Thyroid gland (tissue), 4 donors: ENCODE measurements at regions of chr18 and their contacts with region 1.

Region 1: GRCh38 chr18:51390702-51391101 is 193.2 kb upstream of the MEX3C start:
- DNase-seq: no peak
- H3K4me3 ChIP-seq: no peak overlapping the region
- H3K27ac ChIP-seq: no peak overlapping the region
- H3K4me1 ChIP-seq: no peaks in the 10 kb centered on the region
- H3K27me3 ChIP-seq: no peaks in the 10 kb centered on the region
- CTCF ChIP-seq: no peak
- POLR2A ChIP-seq: no peak

Region 2: GRCh38 chr18:51053814-51054213 is 336.9 kb before region 1 on chr18:
- intact Hi-C with region 1: no loop called
- DNase-seq: no peak
- H3K4me3 ChIP-seq: no peak overlapping the region
- H3K27ac ChIP-seq: peak overlapping the region in 2 of 3 donors; percentile 38 to 52
- H3K4me1 ChIP-seq: peaks cover 11% of the 10 kb centered on the region in 2 donors
- H3K27me3 ChIP-seq: no peaks in the 10 kb centered on the region
- CTCF ChIP-seq: no peak
- POLR2A ChIP-seq: no peak

Region 3: DNA sequence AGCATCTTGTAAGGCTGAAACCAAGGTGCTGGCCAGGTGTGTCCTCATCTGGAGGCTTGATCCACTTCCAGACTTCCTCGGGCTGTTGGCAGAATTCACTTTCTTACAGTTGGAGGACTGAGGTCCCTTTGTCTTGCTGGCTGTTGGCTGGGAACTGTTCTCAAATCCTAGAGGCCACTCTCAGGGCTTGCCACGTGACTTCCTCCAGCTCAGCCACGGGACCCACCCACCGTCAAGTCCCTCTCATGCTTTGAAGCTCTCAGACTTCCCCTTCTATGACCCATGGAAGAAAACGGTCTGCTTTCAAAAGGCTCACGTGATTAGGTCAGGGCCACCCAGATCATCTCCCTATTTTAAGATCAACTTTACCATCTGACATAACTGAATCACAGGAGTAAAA is 283.6 kb before region 1 on chr18:
- intact Hi-C with region 1: loop called (anchors 10 kb)
- DNase-seq: no peak
- H3K4me3 ChIP-seq: no peak overlapping the region
- H3K27ac ChIP-seq: no peak overlapping the region
- H3K4me1 ChIP-seq: peaks cover 0 to 6% of the 10 kb centered on the region in 2 donors
- H3K27me3 ChIP-seq: no peaks in the 10 kb centered on the region
- CTCF ChIP-seq: no peak
- POLR2A ChIP-seq: no peak

Region 4: DNA sequence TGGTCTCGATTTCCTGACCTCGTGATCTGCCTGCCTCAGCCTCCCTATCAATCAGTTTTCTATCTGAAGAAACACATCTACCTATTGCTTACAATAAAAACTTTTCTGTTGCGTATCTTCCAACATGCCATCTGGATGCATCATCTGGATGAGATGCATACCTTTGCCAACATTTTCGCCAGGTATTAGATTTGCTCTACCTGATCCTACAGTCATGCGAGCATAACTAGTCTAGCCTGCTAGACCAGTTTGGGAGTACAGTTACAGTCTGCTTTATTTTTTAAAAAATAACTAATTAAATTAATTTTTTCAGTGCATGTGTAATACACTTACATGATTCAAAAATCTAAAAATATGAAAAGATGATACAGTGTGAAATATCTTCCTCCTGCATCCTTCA is 140.8 kb after region 1 on chr18:
- intact Hi-C with region 1: no loop called
- DNase-seq: no peak
- H3K4me3 ChIP-seq: no peak overlapping the region
- H3K27ac ChIP-seq: no peak overlapping the region
- H3K4me1 ChIP-seq: no peaks in the 10 kb centered on the region
- H3K27me3 ChIP-seq: no peaks in the 10 kb centered on the region
- CTCF ChIP-seq: no peak
- POLR2A ChIP-seq: no peak

Region 5: DNA sequence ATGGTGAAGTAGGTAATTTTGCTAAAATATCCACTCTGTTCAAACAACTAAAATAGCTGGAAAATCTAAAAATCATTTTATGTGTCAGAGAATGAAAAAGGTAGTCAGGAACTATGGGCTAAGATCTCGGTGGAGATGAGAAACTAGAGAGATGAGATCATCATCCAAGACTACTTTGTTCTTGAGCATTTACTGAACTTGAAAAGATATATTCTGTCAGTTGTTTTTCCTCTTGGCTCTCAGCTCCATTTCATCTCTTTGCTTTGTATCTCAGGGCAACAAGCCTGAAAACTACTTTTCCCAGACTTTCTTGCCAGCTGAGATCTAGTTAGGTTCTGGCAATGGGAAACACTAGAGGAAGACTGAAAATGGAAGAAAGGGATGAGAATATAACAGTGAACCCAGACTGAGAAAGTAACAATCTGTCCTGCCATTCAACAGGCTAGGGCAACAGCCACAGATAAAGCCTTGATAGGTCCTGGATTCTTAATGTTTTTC is 153.0 kb after region 1 on chr18:
- intact Hi-C with region 1: no loop called
- DNase-seq: no peak
- H3K4me3 ChIP-seq: no peak overlapping the region
- H3K27ac ChIP-seq: no peak overlapping the region
- H3K4me1 ChIP-seq: no peaks in the 10 kb centered on the region
- H3K27me3 ChIP-seq: no peaks in the 10 kb centered on the region
- CTCF ChIP-seq: no peak
- POLR2A ChIP-seq: no peak

Region 6: DNA sequence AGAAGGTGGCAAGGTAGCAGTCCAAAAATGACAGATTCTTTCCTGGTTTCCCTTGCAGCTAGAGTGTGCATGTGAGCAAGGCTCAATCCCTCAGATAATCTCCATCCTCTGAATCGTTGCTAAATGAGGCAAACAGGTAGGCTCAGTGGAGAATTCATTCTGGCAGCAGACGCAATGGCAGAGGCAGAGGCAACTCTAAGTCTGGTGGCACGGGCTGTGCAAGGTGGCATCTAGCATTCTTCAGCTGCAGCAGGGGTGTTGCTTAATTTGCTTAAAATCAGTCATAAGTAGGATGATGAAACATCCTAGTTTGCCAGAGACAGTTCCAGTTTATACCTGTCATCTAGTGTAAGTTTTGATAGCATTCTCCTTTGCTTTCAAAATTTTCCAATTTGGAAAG is 197.9 kb after region 1 on chr18:
- intact Hi-C with region 1: no loop called
- DNase-seq: no peak
- H3K4me3 ChIP-seq: no peak overlapping the region
- H3K27ac ChIP-seq: no peak overlapping the region
- H3K4me1 ChIP-seq: no peaks in the 10 kb centered on the region
- H3K27me3 ChIP-seq: no peaks in the 10 kb centered on the region
- CTCF ChIP-seq: no peak
- POLR2A ChIP-seq: no peak